Posterior vena cava (tissue), 2 donors: ENCODE measurements at regions of chr4 and their contacts with region 1.

Region 1: DNA sequence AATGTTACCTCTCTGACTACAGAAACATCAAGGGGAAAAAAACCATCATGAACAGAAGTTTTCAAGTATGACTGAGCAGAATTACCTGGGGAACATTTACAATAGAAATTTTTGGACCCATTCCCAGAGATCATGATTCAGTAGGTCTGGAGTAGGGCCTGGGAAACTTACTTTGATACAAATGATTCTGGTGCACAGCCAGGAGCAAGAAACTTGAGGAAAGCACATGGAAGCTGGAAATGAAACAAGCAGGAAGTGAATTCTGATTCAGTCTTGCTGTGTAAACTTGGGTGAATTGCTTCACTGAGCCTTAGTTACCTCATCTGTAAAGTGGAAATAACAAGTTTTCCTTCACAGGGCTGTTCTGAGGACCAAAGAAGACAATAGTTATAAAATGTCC is 192.5 kb upstream of the TAPT1 start:
- DNase-seq: no peak

Region 2: DNA sequence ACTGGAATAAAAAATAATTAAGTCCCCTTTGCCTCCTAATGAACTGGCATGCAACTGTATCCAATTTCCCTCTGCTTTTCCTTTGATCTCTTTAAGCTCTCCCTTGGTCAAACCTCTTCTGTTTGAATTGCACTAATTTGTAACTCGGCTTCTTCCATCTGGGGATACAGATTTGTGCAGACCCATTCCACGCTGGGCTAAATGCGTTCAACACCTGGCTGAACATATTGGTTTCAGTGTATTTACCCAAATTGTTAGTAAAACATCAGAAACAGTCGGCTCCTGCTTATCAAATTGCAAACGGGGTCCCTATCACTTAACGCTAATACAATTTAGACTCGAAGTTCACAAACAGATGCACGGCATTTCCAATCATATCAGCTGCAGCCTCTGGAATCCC is 67.7 kb before region 1 on chr4:
- intact Hi-C with region 1: no loop called
- DNase-seq: no peak

Region 3: GRCh38 chr4:16431866-16432265 is 13.1 kb after region 1 on chr4:
- intact Hi-C with region 1: no loop called
- DNase-seq: no peak

Region 4: DNA sequence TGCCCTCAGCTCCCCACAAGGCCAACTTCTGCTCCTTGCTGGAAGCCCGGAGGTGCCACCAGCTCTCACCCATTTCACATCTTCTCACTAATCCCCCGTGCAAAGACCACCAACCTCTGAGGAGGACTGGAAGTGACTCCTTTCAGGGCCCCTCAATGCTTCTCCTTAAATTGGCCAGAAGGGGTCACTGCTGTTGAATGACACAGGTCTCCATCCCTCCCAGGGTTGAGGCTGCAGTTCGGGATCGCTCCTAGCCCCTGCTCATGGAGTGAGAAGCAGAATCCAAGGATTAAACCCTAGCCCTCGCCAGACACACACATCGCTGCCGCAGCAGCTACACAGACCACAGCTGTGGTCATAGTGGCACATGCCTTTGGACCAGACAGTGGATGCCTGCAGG is 86.9 kb after region 1 on chr4:
- intact Hi-C with region 1: no loop called
- DNase-seq: no peak

Region 5: GRCh38 chr4:18381186-18381585 is 1962.4 kb after region 1 on chr4:
- intact Hi-C with region 1: loop called in 1 of 2 experiments (anchors 5 kb)
- DNase-seq: no peak